Left lung (tissue), 14 donors: ENCODE measurements at regions of chr3 and their contacts with region 1.

Region 1: GRCh38 chr3:54951405-54951804 is 23.5 kb upstream of the LRTM1 start:
- DNase-seq: peak; percentile 64 to 86 (median 74)
- ATAC-seq: peak; percentile 92
- H3K4me3 ChIP-seq: no peak overlapping the region
- H3K27ac ChIP-seq: no peak overlapping the region
- H3K4me1 ChIP-seq: no peaks in the 10 kb centered on the region
- H3K27me3 ChIP-seq: no peaks in the 10 kb centered on the region
- CTCF ChIP-seq: peak; percentile 39 to 44

Region 2: DNA sequence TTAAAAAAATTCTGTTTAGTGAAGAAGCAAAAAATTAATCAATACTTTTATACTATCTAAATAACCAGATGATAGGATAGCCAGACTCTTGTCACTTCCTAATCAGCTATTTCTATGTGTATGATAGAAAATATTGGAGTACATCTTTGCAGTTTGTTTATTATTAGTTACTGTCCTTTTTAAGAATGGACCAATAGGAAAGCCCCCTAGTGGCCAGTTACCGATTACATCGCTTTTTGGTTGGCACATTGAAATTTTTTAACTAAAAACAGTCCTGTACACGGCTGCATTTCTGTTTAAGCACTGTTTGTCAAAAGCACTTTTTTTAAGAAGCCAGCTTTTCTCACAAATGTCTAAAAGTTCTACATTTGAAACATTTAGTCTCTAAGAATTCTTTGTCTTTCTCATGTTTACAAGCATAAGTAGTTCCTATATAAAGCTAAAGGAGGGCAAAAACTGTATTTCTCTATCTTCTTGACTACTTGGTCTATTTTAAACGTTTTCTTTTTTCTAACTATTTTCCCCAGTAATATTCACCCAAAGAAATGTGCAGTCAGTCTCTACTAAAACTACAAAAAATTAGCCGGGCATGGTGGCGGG is 229.6 kb after region 1 on chr3:
- intact Hi-C with region 1: loop called in 1 of 2 experiments (anchors 10 kb)
- DNase-seq: peak in 2 of 4 donors; percentile 20 to 45
- ATAC-seq: peak; percentile 36
- H3K4me3 ChIP-seq: no peak overlapping the region
- H3K27ac ChIP-seq: no peak overlapping the region
- H3K4me1 ChIP-seq: no peaks in the 10 kb centered on the region
- H3K27me3 ChIP-seq: no peaks in the 10 kb centered on the region
- CTCF ChIP-seq: peak; percentile 57 to 69